WTC11 (cell line): ENCODE measurements at regions of chr6 and their contacts with region 1.

Region 1: DNA sequence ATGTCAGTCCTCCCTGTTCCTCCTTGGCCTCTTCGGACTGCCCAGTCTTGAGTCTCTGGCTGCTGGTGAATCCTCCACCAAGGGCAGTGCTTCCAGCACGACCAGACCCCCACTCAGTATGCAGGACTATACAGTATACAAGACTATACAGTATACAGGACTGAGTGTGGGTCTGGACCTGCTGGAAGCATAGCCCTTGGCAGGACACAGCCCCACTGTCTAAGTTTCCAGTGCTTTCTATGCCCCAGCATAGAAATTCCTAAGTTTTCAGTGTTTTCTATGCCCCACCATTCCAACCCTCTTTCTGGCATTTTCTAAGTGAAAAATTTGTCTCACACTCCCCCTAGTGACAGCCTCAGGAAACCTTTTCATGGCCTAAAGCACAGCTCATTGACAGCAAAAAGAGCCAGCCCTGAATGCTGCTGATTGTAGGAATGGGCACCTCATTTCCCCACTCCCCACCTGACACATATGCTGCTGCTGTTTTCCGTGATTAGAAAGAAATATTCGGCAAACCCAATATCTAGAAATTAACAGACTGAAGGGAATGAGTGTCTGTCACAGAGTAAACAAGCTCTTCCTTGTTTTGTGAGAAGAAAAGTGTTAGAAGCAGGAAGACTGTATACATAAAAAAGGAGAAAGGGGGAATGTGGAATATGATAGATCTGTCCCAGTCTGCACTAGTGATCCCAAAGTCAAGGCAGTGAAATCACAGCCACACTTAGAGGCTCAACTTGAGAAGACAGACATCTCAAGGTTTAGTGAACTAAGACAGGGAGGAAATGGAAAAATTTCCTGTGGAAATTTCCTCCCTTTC is 206.9 kb downstream of the IBTK start:
- DNase-seq: peak; percentile 47
- ATAC-seq: peak; percentile 97
- H3K4me3 Mint-ChIP-seq: no peak overlapping the region
- H3K27ac Mint-ChIP-seq: peak overlapping the region; percentile 55; the same call in 1 of the 2 replicates
- H3K4me1 Mint-ChIP-seq: peaks cover 3% of the 10 kb centered on the region; the same call in 1 of the 2 replicates
- H3K27me3 Mint-ChIP-seq: no peaks in the 10 kb centered on the region
- CTCF ChIP-seq: peak; percentile 51

Region 2: GRCh38 chr6:81818901-81819361 is 221.7 kb before region 1 on chr6:
- CTCF ChIA-PET with region 1: no interaction called
- POLR2A ChIA-PET with region 1: no interaction called
- DNase-seq: no peak
- ATAC-seq: no peak
- H3K4me3 Mint-ChIP-seq: no peak overlapping the region
- H3K27ac Mint-ChIP-seq: no peak overlapping the region
- H3K4me1 Mint-ChIP-seq: 0 out of 2 replicates have a peak, but pooled peaks cover 3% of the 10 kb centered on the region
- H3K27me3 Mint-ChIP-seq: no peaks in the 10 kb centered on the region
- CTCF ChIP-seq: no peak

Region 3: DNA sequence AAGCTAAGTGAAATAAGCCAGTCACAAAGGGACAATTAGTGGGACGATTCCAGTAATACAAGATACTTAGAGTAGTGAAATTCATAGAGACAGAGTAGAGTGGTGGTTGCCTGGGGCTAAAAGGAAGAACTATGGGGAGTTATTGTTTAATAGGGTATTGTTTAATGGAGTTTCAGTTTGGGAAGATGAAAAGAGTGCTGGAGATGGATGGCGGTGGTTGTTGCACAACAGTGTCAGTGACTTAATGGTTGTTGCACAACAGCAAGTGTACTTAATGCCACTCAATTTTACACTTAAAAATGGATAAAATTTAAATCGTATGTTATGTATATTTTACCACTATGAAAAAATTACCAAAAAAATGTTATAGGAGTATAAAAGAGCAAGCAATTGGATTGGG is 78.4 kb before region 1 on chr6:
- CTCF ChIA-PET with region 1: no interaction called
- POLR2A ChIA-PET with region 1: no interaction called
- DNase-seq: no peak
- ATAC-seq: no peak
- H3K4me3 Mint-ChIP-seq: no peak overlapping the region
- H3K27ac Mint-ChIP-seq: no peak overlapping the region
- H3K4me1 Mint-ChIP-seq: no peaks in the 10 kb centered on the region
- H3K27me3 Mint-ChIP-seq: peaks cover 2% of the 10 kb centered on the region; the same call in 1 of the 2 replicates
- CTCF ChIP-seq: no peak

Region 4: DNA sequence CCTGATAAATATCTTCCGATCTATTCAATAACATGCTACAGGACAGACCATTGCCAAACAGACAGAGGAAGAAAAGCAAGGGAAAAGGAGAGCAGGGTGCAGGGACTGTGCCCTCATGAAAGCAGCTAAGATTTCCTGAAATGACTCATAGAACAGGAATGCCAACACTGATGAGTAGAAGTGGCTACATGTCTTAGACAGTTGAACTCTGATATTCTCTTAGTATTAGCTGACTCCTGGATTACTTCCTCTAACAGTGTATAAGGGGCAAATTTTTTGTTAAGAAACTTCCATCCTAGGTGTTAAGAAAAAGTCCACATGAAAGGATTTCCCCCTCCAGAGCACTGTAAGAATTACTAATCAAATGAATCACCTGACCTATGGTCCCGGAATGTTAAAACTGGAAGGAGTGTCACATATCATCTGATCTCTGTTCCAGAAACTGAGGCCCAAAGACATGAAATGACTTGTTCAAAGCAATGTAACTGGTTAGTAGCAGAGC is 18.0 kb before region 1 on chr6:
- CTCF ChIA-PET with region 1: interaction called, 12 read pairs
- POLR2A ChIA-PET with region 1: no interaction called
- DNase-seq: no peak
- ATAC-seq: peak; percentile 38; the same call in 1 of the 2 replicates
- H3K4me3 Mint-ChIP-seq: no peak overlapping the region
- H3K27ac Mint-ChIP-seq: no peak overlapping the region
- H3K4me1 Mint-ChIP-seq: peaks cover 4% of the 10 kb centered on the region; the same call in 1 of the 2 replicates
- H3K27me3 Mint-ChIP-seq: no peaks in the 10 kb centered on the region
- CTCF ChIP-seq: no peak

Region 5: GRCh38 chr6:82066991-82067411 is 26.4 kb after region 1 on chr6:
- CTCF ChIA-PET with region 1: no interaction called
- POLR2A ChIA-PET with region 1: no interaction called
- DNase-seq: no peak
- ATAC-seq: no peak
- H3K4me3 Mint-ChIP-seq: no peak overlapping the region
- H3K27ac Mint-ChIP-seq: no peak overlapping the region
- H3K4me1 Mint-ChIP-seq: no peaks in the 10 kb centered on the region
- H3K27me3 Mint-ChIP-seq: no peaks in the 10 kb centered on the region
- CTCF ChIP-seq: no peak

Region 6: GRCh38 chr6:82363351-82364086 is 322.9 kb after region 1 on chr6 and contains the start of gene TPBG:
- CTCF ChIA-PET with region 1: no interaction called
- POLR2A ChIA-PET with region 1: no interaction called
- DNase-seq: peak; percentile 92
- ATAC-seq: peak; percentile 78
- H3K4me3 Mint-ChIP-seq: peak within 1 kb of the TSS; percentile 93
- H3K27ac Mint-ChIP-seq: peak within 1 kb of the TSS; percentile 97
- H3K4me1 Mint-ChIP-seq: peaks cover 26% of the 10 kb centered on the region
- H3K27me3 Mint-ChIP-seq: peaks cover 3% of the 10 kb centered on the region; the same call in 1 of the 2 replicates
- CTCF ChIP-seq: 0 out of 2 replicates have a peak, but pooled peaks have one; percentile 3
- total RNA-seq, gene TPBG: 29.6 to 35.3 TPM (median 30.4 TPM) in 3 replicates